G401 (cell line): ENCODE measurements at regions of chr14 and their contacts with region 1.

Region 1: DNA sequence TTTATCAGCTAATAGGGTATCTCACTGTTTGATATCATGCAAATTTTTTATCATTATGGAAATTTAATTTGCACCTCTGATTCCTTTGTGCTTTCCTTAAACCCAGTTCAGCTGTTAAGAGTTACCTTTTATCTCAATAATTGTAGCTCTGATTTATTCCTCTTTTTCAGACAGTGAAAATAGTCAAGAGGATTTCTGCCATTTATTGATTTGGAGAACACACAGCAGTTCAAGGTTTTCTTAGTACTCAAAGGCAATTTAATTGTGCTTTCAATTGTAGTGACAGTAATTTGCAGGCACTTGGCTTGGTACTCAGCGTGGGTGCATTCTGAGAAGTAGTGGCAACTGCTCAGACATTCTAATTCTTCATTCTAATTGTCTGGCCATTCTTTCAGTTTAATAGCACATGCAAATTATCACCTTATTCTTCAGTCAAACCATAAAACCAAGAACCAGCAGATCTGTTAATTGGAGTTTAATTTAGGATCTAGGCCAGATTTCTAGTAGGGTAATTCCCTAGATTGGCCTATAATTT is 709.3 kb downstream of the RPS29 start:
- DNase-seq: no peak

Region 2: GRCh38 chr14:48963231-48963790 is 86.4 kb after region 1 on chr14:
- in situ Hi-C with region 1: no loop called
- DNase-seq: no peak

Region 3: GRCh38 chr14:49019467-49020115 is 142.7 kb after region 1 on chr14:
- in situ Hi-C with region 1: loop called (anchors 5 kb)
- DNase-seq: no peak